Activated CD4-positive, alpha-beta T cell treated with anti-CD3 and anti-CD28 coated beads for 36 hours (primary cell): ENCODE measurements at regions of chr17 and their contacts with region 1.

Region 1: GRCh38 chr17:39927101-39927928 is at the starts of genes LRRC3C and ORMDL3:
- DNase-seq: peak; percentile 96
- ATAC-seq: peak; percentile 78
- H3K4me3 Mint-ChIP-seq: peak within 1 kb of the TSS; percentile 85
- H3K27ac Mint-ChIP-seq: peak within 1 kb of the TSS; percentile 95
- H3K4me1 Mint-ChIP-seq: peaks cover 56% of the 10 kb centered on the region
- H3K27me3 Mint-ChIP-seq: no peaks in the 10 kb centered on the region
- total RNA-seq, gene LRRC3C: not detected
- total RNA-seq, gene ORMDL3: 46.8 to 64.9 TPM

Region 2: GRCh38 chr17:39401412-39402243 is 525.7 kb before region 1 on chr17 and contains the start of gene FBXL20:
- CTCF ChIA-PET with region 1: no interaction called
- POLR2A ChIA-PET with region 1: no interaction called
- intact Hi-C with region 1: loop called in 1 of 2 experiments (anchors 10 kb)
- DNase-seq: peak; percentile 97
- ATAC-seq: peak; percentile 63
- H3K4me3 Mint-ChIP-seq: peak within 1 kb of the TSS; percentile 91
- H3K27ac Mint-ChIP-seq: peak within 1 kb of the TSS; percentile 92
- H3K4me1 Mint-ChIP-seq: peaks cover 48% of the 10 kb centered on the region
- H3K27me3 Mint-ChIP-seq: no peaks in the 10 kb centered on the region
- total RNA-seq, gene FBXL20: 16.9 to 18.9 TPM

Region 3: GRCh38 chr17:39461113-39461925 is 466.0 kb before region 1 on chr17 and contains the start of gene CDK12:
- CTCF ChIA-PET with region 1: no interaction called
- POLR2A ChIA-PET with region 1: no interaction called
- intact Hi-C with region 1: loop called in 1 of 2 experiments (anchors 1 kb)
- DNase-seq: peak; percentile 97
- ATAC-seq: peak; percentile 91
- H3K4me3 Mint-ChIP-seq: peak within 1 kb of the TSS; percentile 91
- H3K27ac Mint-ChIP-seq: peak within 1 kb of the TSS; percentile 94
- H3K4me1 Mint-ChIP-seq: peaks cover 22% of the 10 kb centered on the region
- H3K27me3 Mint-ChIP-seq: no peaks in the 10 kb centered on the region
- total RNA-seq, gene CDK12: 65.9 to 83.3 TPM

Region 4: DNA sequence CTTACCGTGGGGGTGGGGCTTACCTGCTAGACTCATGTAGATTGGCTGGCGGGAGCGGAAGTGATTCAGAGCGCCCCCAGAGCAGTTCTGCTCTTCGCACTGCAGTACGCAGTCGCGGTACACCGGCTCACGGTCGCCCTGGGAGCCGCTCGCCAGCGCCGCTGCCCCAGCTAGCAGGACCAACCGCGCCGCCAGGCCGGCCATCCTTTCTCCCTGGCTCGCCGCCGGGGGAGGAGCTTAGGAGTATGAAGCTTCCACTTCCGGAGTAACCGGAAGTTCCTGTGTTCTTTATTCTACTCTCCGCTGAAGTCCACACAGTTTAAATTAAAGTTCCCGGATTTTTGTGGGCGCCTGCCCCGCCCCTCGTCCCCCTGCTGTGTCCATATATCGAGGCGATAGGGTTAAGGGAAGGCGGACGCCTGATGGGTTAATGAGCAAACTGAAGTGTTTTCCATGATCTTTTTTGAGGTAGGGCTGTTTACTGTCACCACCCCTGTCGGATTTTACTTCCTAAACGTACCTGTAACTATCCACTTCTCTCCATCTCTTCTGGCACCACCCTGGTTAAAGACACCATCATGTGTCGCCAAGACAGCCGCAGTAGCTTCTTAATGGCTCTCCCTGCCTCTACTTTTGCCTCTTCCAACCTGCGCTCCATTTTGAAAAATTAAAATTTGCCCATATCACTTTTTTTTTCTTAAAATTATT is 239.3 kb before region 1 on chr17 and contains the start of gene PGAP3:
- CTCF ChIA-PET with region 1: no interaction called
- POLR2A ChIA-PET with region 1: no interaction called
- intact Hi-C with region 1: loop called in 1 of 2 experiments (anchors 1 kb)
- DNase-seq: peak; percentile 92
- ATAC-seq: peak; percentile 96
- H3K4me3 Mint-ChIP-seq: peak within 1 kb of the TSS; percentile 86
- H3K27ac Mint-ChIP-seq: peak within 1 kb of the TSS; percentile 95
- H3K4me1 Mint-ChIP-seq: peaks cover 19% of the 10 kb centered on the region
- H3K27me3 Mint-ChIP-seq: no peaks in the 10 kb centered on the region
- total RNA-seq, gene PGAP3: 8.6 to 11.9 TPM

Region 5: DNA sequence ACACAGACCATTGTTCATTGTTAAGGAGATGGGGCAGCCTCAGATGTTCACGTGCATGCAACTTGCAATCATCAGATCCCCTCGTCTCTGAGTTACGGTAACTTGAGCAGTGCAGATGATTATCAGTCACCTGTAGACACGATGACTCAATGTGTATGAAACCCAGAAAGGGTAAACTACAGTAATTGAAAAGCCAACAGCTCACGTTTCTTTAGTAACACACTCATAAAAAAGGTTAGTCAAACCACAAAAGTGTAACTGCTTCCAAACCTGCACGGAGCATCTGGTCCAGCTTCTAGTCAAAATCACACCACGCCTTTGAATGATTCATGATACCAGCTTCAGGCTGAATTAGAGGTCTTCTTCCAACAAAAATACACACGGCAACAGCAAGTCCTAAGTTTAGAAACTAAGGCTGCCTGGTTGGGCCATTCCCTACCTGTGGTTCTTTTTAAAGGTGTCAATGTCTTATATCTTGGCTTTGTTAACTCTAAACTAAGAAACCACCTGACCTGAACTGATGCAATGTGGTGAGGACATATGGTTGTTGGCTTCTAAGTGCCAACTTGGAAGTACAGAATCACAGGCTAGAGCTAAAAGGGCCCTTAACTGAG is 157.2 kb before region 1 on chr17:
- CTCF ChIA-PET with region 1: no interaction called
- POLR2A ChIA-PET with region 1: no interaction called
- intact Hi-C with region 1: loop called (anchors 2 to 5 kb)
- DNase-seq: peak; percentile 78
- ATAC-seq: peak; percentile 80
- H3K4me3 Mint-ChIP-seq: peak overlapping the region; percentile 7
- H3K27ac Mint-ChIP-seq: peak overlapping the region; percentile 82
- H3K4me1 Mint-ChIP-seq: peaks cover 96% of the 10 kb centered on the region
- H3K27me3 Mint-ChIP-seq: no peaks in the 10 kb centered on the region

Region 6: DNA sequence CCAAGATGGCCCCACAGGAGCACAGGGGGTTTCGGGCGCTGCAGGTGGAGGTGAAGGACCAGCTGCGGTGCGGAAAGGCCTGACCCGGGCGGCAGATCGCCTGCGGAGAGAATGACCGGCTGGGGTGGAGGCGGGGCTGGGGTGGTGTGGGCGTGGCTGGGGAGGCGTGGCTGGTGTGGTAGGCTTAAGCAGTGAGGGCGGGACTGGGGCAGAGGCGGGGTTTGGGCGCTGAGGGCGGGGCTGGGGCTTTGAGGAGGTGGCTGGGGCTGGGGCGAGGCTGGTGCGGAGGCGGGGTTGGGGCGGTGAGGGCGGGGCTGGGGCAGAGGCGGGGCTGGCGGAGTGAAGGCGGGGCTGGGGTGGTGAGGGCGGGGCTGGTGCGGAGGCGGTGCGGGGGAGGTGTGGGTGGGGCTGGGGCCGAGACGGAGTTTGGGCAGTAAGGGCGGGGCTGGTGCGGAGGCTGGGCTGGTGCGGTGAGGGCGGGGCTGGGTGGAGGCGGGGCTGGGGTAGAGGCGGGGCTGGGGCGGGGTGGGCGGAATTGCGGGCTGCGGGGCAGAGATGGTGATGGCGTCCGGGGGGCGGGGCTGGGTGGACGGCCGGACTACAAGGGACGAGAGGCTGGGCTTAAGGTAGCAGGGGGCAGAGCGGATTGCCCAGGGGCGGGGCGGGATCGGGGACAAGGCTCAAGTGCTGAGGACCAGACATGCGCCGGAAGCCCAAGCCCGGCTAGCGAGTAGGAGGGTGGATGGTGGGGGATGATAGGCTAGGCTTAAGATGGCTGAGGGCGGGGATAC is 25.6 kb after region 1 on chr17:
- CTCF ChIA-PET with region 1: interaction called, 3 read pairs
- POLR2A ChIA-PET with region 1: no interaction called
- intact Hi-C with region 1: loop called (anchors 1 to 2 kb)
- DNase-seq: peak; percentile 98
- ATAC-seq: peak; percentile 87
- H3K4me3 Mint-ChIP-seq: peak overlapping the region; percentile 73
- H3K27ac Mint-ChIP-seq: peak overlapping the region; percentile 69
- H3K4me1 Mint-ChIP-seq: peaks cover 12% of the 10 kb centered on the region
- H3K27me3 Mint-ChIP-seq: no peaks in the 10 kb centered on the region